Activated CD4-positive, alpha-beta T cell treated with anti-CD3 and anti-CD28 coated beads, Interleukin-2, amount 10 ng/mL, durations not matched to agents 7 days and 5 days (primary cell): ENCODE measurements at regions of chr12 and their contacts with region 1.

Region 1: DNA sequence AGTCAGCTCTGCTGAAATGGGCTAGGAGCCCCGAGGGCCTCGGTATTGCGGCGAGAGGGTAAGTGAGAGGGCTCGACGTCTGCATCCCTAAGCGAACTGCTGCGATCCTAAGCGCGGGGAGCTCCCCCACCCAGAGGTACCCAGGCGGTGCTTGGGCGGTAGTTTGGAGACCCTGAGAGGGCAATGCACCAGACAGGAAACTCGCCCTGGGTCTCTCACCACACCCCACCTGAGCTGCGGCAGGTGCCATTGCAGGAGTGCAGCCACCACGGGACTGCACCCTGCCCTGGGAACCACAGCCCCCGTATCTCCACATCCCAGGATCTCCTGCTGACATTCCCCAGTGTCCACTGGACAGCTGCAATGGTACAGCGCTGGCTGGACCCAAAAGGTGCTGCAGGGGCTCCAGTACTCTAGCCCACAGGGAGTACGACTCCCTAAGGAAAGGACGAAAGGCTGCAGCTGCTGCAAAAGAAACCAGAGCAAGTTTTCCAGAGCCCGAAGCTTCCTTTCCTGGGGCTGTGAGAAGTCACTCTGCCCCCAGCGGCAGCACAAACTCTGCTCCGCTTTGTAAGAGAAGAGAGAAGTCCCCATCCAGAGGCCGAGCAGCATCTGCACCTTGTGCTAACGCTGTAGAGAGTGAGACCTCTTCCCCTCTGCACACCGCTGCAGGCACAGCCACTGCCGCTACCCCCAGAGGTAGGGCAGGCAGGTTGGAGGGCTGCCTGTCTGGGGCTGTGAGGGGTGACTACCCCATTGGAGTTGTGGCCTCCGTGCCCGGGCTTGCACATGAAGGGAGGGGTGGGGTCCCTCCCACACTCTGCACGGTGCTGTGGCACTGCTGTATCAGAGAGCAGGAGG is 31.1 kb upstream of the MON2 start:
- DNase-seq: peak; percentile 51
- H3K4me3 Mint-ChIP-seq: peak overlapping the region; percentile 74
- H3K27ac Mint-ChIP-seq: no peak overlapping the region
- H3K4me1 Mint-ChIP-seq: peaks cover 22% of the 10 kb centered on the region
- H3K27me3 Mint-ChIP-seq: peaks cover 51% of the 10 kb centered on the region

Region 2: GRCh38 chr12:62332598-62332997 is 102.9 kb before region 1 on chr12:
- CTCF ChIA-PET with region 1: no interaction called
- POLR2A ChIA-PET with region 1: no interaction called
- DNase-seq: no peak
- H3K4me3 Mint-ChIP-seq: no peak overlapping the region
- H3K27ac Mint-ChIP-seq: no peak overlapping the region
- H3K4me1 Mint-ChIP-seq: peaks cover 10% of the 10 kb centered on the region
- H3K27me3 Mint-ChIP-seq: no peaks in the 10 kb centered on the region

Region 3: GRCh38 chr12:62799126-62799736 is 363.7 kb after region 1 on chr12:
- CTCF ChIA-PET with region 1: interaction called, 46 read pairs
- POLR2A ChIA-PET with region 1: no interaction called
- DNase-seq: peak; percentile 71
- H3K4me3 Mint-ChIP-seq: no peak overlapping the region
- H3K27ac Mint-ChIP-seq: no peak overlapping the region
- H3K4me1 Mint-ChIP-seq: no peaks in the 10 kb centered on the region
- H3K27me3 Mint-ChIP-seq: peaks cover 4% of the 10 kb centered on the region

Region 4: GRCh38 chr12:62813031-62813829 is 377.7 kb after region 1 on chr12:
- CTCF ChIA-PET with region 1: interaction called, 11 read pairs
- POLR2A ChIA-PET with region 1: no interaction called
- DNase-seq: peak; percentile 22
- H3K4me3 Mint-ChIP-seq: peak overlapping the region; percentile 37
- H3K27ac Mint-ChIP-seq: no peak overlapping the region
- H3K4me1 Mint-ChIP-seq: peaks cover 26% of the 10 kb centered on the region
- H3K27me3 Mint-ChIP-seq: peaks cover 25% of the 10 kb centered on the region